A549 (cell line): ENCODE measurements at regions of chr15 and their contacts with region 1.

Region 1: DNA sequence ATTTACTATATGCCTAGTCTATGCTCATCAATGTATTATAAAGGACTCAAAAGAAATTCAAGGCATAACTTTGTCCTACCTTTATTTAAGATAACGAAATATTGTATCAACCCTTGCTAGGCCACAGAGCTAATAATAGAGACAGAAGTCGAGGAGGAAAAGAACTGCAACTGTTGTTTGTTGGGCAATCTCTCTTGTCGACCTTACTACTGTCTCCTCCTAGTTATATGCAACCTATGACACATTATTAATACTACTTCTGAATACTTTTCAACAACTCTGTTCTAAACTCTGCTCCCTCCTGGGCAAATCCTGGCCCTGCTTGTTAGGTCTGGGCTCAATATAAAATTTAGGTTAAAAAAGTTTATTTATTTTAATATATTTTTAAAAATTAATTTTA is 24.6 kb downstream of the SPPL2A start:
- DNase-seq: no peak
- ATAC-seq: no peak
- H3K4me3 ChIP-seq: no peak overlapping the region
- H3K27ac ChIP-seq: no peak overlapping the region
- H3K4me1 ChIP-seq: peaks cover 3% of the 10 kb centered on the region; the same call in 1 of the 3 replicates
- CTCF ChIP-seq: no peak
- EP300 ChIP-seq: no peak
- POLR2A ChIP-seq: no peak
- RAD21 ChIP-seq: no peak

Region 2: DNA sequence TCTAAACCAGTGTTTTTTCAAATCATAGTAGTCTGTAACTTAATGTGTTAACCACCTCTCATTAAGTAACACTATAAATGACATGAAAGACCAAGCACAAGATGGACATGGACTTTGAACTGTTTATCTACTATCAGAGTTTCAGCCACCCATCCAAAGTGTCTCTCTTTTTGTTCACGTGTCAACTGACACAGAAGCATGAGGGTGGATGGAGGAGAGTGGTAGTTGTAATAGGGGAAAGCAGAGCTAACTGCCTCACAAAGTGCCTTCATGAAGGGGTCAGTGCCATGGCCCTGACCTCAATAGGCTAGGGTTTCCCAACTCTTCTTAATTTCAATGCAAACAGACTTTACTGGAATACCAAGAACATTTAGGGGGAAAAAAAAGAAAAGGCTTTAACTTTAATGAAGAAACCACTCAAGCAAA is 22.2 kb before region 1 on chr15:
- CTCF ChIA-PET with region 1: interaction called, 4 read pairs
- POLR2A ChIA-PET with region 1: interaction called, 12 read pairs
- DNase-seq: no peak
- ATAC-seq: no peak
- H3K4me3 ChIP-seq: no peak overlapping the region
- H3K27ac ChIP-seq: no peak overlapping the region
- H3K4me1 ChIP-seq: no peaks in the 10 kb centered on the region
- CTCF ChIP-seq: no peak
- EP300 ChIP-seq: no peak
- POLR2A ChIP-seq: no peak
- RAD21 ChIP-seq: no peak